ENCODE measurements at regions of chr3 and their contacts with region 1.

Region 1: GRCh38 chr3:197801891-197802778 is 11.1 kb downstream of the LRCH3 start:
- DNase-seq: no peak
- ATAC-seq: peak; percentile 40
- H3K4me3 Mint-ChIP-seq: no peak overlapping the region
- H3K27ac Mint-ChIP-seq: peak overlapping the region; percentile 65
- H3K4me1 Mint-ChIP-seq: peaks cover 56% of the 10 kb centered on the region
- H3K27me3 Mint-ChIP-seq: no peaks in the 10 kb centered on the region
- CTCF ChIP-seq: no peak

Region 2: DNA sequence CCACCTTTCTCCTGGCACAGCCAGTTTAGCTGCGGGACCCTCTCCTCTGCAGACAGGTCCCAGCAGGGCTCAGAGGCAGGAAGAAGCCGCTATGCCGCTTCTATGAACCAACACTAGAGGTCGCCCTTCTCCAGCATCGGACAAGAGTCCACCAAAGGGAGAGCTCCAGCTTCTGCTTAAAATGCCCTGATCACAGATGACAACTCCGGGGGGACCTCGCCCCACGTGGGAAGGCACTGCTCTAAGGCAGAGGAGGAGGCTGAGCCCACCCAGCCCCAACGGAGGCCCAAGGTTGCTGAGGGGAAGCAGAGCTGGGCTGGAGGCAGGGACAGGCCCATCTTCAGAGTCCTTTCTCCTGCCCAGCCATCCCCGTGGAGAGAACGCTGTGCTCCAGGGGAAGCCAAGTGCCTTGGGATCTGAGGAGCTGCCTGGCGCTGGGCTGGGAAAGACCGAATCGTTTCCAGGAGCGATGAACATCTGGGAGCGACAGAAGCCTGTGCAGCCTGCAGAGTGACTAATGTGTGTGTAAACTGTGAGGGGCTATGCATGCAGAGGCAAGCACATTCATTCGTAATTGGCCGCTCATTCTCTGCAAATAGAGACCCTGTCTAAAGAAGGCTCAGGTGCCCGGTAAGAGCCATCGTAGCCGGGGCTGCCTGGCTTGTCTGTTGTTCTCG is 202.9 kb before region 1 on chr3:
- CTCF ChIA-PET with region 1: interaction called, 11 read pairs
- POLR2A ChIA-PET with region 1: no interaction called
- intact Hi-C with region 1: loop called (anchors 1 kb)
- DNase-seq: peak; percentile 57
- ATAC-seq: peak; percentile 98
- H3K4me3 Mint-ChIP-seq: no peak overlapping the region
- H3K27ac Mint-ChIP-seq: no peak overlapping the region
- H3K4me1 Mint-ChIP-seq: peaks cover 9% of the 10 kb centered on the region
- H3K27me3 Mint-ChIP-seq: no peaks in the 10 kb centered on the region
- CTCF ChIP-seq: peak; percentile 21

Region 3: GRCh38 chr3:197692641-197693040 is 109.5 kb before region 1 on chr3:
- CTCF ChIA-PET with region 1: no interaction called
- POLR2A ChIA-PET with region 1: no interaction called
- intact Hi-C with region 1: loop called (anchors 5 kb)
- DNase-seq: no peak
- ATAC-seq: no peak
- H3K4me3 Mint-ChIP-seq: no peak overlapping the region
- H3K27ac Mint-ChIP-seq: no peak overlapping the region
- H3K4me1 Mint-ChIP-seq: peaks cover 1% of the 10 kb centered on the region
- H3K27me3 Mint-ChIP-seq: no peaks in the 10 kb centered on the region
- CTCF ChIP-seq: no peak

Region 4: GRCh38 chr3:197749601-197750395 is 52.3 kb before region 1 on chr3 and contains the start of gene FYTTD1:
- CTCF ChIA-PET with region 1: interaction called, 5 read pairs
- POLR2A ChIA-PET with region 1: interaction called, 3 read pairs
- intact Hi-C with region 1: loop called (anchors 1 kb)
- DNase-seq: peak; percentile 95
- ATAC-seq: peak; percentile 91
- H3K4me3 Mint-ChIP-seq: peak within 1 kb of the TSS; percentile 97
- H3K27ac Mint-ChIP-seq: peak within 1 kb of the TSS; percentile 94
- H3K4me1 Mint-ChIP-seq: peaks cover 42% of the 10 kb centered on the region
- H3K27me3 Mint-ChIP-seq: no peaks in the 10 kb centered on the region
- CTCF ChIP-seq: no peak
- total RNA-seq, gene FYTTD1: 78.6 and 84.2 TPM in 2 replicates

Region 5: GRCh38 chr3:197791113-197791891 is 10.8 kb before region 1 on chr3 and contains the start of gene LRCH3:
- CTCF ChIA-PET with region 1: interaction called, 6 read pairs
- POLR2A ChIA-PET with region 1: interaction called, 12 read pairs
- intact Hi-C with region 1: no loop called
- DNase-seq: peak; percentile 84
- ATAC-seq: peak; percentile 73
- H3K4me3 Mint-ChIP-seq: peak within 1 kb of the TSS; percentile 86
- H3K27ac Mint-ChIP-seq: peak within 1 kb of the TSS; percentile 97
- H3K4me1 Mint-ChIP-seq: peaks cover 63% of the 10 kb centered on the region
- H3K27me3 Mint-ChIP-seq: no peaks in the 10 kb centered on the region
- CTCF ChIP-seq: no peak
- total RNA-seq, gene LRCH3: 94.1 and 96.1 TPM in 2 replicates